ENCODE measurements at regions of chr11 and their contacts with region 1.

Region 1: GRCh38 chr11:44596525-44597276 is 31.2 kb downstream of the CD82 start:
- DNase-seq: no peak
- ATAC-seq: peak in 2 of 4 donors; percentile 12 to 33
- H3K4me3 ChIP-seq: no peak overlapping the region
- H3K27ac ChIP-seq: peak overlapping the region; percentile 61
- H3K4me1 ChIP-seq: peaks cover 55% of the 10 kb centered on the region
- H3K27me3 ChIP-seq: no peaks in the 10 kb centered on the region
- CTCF ChIP-seq: no peak

Region 2: DNA sequence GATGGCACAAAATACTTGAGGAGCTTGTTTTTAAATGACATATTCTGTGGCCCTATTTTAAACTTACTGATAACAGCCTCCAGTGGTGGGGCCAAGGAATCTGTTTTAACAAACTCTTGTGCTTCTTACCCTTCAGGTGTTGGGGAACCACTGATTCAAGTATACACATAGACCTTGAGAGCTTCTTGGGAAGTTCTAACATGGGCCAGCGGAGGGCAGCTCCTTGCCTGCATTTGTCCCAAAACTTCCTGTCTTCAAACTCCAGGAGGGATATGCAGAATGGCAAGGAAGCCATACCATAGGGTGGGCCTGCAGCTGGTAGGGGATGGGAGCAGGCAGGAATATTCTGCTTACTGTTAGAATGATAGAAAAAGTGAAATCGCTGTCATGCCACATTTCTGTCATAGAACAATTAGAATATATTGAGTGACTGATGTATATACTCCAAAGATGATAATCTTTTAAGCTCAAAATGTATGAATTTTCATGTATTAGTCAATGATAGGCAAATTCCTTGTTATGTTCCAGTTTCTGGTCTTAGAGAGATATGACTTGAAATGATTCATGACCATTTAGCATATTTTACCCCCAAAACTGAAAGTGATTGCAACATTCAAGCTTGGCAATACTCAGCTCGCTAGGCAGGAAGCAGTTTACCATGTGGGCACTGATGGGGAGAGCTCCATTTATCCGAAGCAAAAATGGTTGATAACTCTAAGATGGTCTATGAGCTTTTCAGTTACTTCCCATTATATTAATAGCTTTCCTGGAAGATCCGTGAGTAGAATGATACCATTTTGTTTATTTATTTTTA is 492.0 kb before region 1 on chr11:
- intact Hi-C with region 1: loop called in 1 of 2 experiments (anchors 10 kb)
- DNase-seq: no peak
- ATAC-seq: no peak
- H3K4me3 ChIP-seq: no peak overlapping the region
- H3K27ac ChIP-seq: no peak overlapping the region
- H3K4me1 ChIP-seq: peaks cover 21% of the 10 kb centered on the region
- H3K27me3 ChIP-seq: no peaks in the 10 kb centered on the region
- CTCF ChIP-seq: no peak

Region 3: DNA sequence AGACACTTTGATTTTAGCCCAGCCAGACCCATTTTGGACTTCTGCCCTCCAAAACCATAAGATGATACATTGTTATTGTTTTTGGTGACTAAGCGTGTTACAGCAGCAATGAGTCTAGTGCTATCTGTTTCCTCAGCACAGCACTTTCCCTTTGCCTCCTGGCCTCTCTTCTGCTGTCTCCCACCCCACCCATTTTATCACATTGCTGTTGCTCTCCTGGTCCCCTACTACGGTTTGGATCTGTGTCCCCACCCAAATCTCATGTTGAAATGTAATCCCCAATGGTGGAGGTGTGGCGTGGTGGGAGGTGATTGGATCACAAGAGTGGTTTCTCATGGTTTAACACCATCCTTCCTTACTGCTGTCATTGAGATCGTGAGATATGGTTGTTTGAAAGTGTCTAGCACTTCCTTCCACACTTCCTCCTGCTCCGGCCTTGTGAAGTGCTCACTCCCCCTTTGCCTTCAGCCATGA is 91.1 kb before region 1 on chr11:
- intact Hi-C with region 1: no loop called
- DNase-seq: no peak
- ATAC-seq: no peak
- H3K4me3 ChIP-seq: no peak overlapping the region
- H3K27ac ChIP-seq: no peak overlapping the region
- H3K4me1 ChIP-seq: no peaks in the 10 kb centered on the region
- H3K27me3 ChIP-seq: peaks cover 0 to 3% (median 0%) of the 10 kb centered on the region in 3 donors
- CTCF ChIP-seq: no peak

Region 4: DNA sequence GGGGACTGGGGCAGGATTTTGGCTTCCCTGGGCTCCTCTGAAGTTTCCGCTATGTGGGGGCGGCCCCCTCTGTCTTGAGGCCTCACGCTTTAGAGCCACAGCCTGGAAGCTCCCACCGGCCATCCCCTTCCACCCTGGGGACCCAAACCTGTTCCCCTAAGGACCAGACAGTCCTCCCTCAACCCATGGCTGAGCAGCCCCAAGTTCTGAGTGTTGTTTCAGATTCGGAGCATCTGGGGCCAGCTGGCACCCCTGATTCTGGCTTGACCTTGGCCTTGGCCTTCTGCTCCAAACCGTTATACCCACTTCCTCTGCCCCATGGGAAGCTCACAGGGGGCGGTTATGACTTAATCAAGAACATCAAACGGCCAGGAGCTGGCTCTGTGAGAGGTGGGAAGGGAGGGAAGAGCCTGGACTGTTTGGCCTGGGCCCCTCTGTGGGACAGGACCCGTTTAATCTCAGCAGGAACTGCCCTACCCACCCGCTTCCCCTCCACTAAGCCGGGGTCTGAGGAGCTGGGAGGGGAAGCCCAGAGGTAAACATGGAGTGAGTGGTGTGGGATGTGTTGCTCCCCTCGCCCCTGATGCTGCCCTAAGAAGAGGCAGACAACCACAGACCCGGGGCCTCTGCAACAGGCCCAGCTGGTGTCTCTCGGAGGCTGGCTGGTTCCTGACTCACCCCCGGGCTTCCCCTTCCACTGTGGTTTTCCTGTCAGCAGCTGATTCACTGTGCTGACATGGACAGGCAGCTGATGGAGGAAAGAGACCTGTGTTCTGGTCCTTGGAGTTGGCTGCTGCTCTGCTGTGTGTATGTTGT is 27.8 kb before region 1 on chr11:
- intact Hi-C with region 1: loop called (anchors 2 to 5 kb)
- DNase-seq: peak; percentile 80 to 82
- ATAC-seq: peak in 3 of 4 donors; percentile 37 to 56 (median 43)
- H3K4me3 ChIP-seq: peak overlapping the region; percentile 77
- H3K27ac ChIP-seq: peak overlapping the region; percentile 82
- H3K4me1 ChIP-seq: peaks cover 46% of the 10 kb centered on the region
- H3K27me3 ChIP-seq: no peaks in the 10 kb centered on the region
- CTCF ChIP-seq: no peak

Region 5: DNA sequence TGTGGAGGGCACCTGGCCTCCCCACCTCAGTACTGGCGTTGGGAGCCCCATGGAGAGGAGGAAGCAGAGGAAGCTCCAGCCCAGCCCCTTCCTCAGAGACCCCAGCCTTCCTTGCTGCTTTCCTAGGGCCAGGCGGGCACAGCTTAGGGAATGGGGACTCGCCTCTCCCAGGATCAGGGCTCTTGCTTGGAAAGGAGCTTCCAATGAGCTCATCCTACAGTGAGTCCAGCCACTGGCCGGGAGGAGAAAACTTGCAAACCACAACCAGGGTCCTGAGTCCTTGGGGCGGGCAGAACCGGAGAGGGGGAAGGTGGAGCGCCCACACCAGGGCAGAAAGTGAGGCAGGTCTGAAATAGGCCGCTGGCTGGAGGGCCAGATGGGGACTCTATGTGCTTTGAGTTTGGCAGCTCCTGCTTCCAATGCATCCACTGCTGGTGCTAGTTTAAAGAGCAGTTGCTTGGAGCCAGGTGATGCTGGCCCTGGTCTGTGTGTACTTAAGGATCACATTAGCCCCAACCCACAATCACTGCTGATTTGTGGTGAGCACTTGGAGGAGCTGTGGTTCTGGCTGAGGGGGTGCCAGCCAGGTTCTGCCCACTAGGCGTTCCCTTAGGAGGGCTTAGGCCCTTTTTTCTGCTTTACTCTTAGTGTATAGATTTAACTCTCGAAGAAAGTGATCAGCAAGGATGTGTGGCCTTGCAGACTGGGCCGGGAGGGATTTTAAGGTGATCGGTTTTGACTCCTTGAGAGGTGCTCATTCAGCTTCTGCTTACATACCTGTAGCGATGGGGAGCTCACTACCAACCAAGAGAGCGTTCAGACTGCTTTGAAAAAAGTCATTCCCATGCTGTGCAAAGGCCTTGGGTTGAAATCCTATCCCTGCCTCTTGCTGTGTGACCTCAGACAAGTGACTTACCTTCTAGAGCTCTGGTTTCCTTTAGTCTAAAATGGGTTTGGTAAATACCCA is 272.0 kb after region 1 on chr11:
- intact Hi-C with region 1: no loop called
- DNase-seq: no peak
- ATAC-seq: no peak
- H3K4me3 ChIP-seq: no peak overlapping the region
- H3K27ac ChIP-seq: no peak overlapping the region
- H3K4me1 ChIP-seq: no peaks in the 10 kb centered on the region
- H3K27me3 ChIP-seq: peaks cover 0 to 6% (median 5%) of the 10 kb centered on the region in 3 donors
- CTCF ChIP-seq: no peak

Region 6: DNA sequence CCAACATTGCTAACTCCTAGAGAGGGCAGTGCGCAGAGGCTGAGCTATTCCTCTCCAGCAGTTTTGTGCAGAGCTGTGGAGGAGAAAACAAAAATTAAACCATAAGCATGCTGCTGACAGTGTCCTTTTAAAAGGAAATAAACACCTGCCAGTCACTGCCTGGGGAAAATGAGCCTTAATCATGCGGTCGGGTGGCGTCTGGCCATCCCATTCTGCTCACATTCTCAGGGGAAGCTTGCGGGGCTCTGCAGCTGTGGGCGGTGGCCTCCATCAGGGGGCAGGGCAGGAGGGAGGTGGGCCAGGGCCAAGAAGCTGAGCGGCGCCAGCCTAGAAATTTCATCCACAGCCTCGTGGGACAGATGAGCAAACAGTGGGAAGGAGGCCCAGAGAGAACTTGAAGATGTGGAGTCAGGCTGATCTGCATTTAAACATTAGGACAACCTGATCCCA is 425.0 kb after region 1 on chr11:
- intact Hi-C with region 1: no loop called
- DNase-seq: peak; percentile 88 to 93
- ATAC-seq: peak; percentile 88 to 95 (median 92)
- H3K4me3 ChIP-seq: peak overlapping the region; percentile 15
- H3K27ac ChIP-seq: peak overlapping the region; percentile 76
- H3K4me1 ChIP-seq: peaks cover 28% of the 10 kb centered on the region
- H3K27me3 ChIP-seq: no peaks in the 10 kb centered on the region
- CTCF ChIP-seq: peak; percentile 3